ENCODE measurements at regions of chr6 and their contacts with region 1.

Region 1: GRCh38 chr6:154537511-154538325 is 27.2 kb upstream of the CNKSR3 start:
- DNase-seq: peak; percentile 29 to 66
- H3K4me3 ChIP-seq: no peak overlapping the region
- H3K4me3 Mint-ChIP-seq: peak overlapping the region; percentile 30
- H3K27ac Mint-ChIP-seq: peak overlapping the region; percentile 21
- H3K4me1 ChIP-seq: peaks cover 22% of the 10 kb centered on the region
- H3K4me1 Mint-ChIP-seq: peaks cover 24% of the 10 kb centered on the region
- H3K27me3 ChIP-seq: no peaks in the 10 kb centered on the region
- H3K27me3 Mint-ChIP-seq: no peaks in the 10 kb centered on the region
- CTCF ChIP-seq: no peak

Region 2: DNA sequence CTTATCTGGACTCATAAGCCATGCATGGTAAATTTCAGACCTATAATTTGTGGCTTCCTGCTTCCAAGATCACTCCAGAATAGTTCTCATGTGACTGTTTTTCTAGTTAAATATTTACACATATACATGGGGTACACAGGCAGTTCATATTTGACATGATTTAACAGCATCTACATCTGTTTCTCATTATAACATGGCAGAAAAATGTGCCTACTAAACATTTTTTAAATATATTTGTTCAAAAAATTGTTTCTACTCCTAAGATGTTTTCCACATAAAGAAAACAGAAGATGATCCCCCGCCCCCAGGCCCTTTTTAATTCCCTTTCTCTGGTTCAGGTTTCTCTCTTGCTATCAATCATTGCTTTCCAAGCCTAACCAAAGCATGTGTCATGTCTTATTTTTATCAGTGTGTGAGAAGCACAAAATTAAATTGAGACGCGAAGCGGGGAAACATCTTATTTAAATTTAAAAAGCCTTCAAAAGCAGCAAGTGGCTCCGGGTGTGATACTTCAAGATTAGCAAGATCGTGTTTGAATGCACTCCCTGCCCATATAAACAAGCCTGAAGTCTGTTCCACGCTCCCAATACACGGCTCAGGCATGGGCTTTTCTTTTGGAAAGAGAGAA is 218.4 kb before region 1 on chr6:
- CTCF ChIA-PET with region 1: no interaction called
- POLR2A ChIA-PET with region 1: no interaction called
- intact Hi-C with region 1: no loop called
- DNase-seq: no peak
- H3K4me3 ChIP-seq: no peak overlapping the region
- H3K4me3 Mint-ChIP-seq: no peak overlapping the region
- H3K27ac Mint-ChIP-seq: no peak overlapping the region
- H3K4me1 ChIP-seq: 0 out of 2 replicates have a peak, but pooled peaks cover 5% of the 10 kb centered on the region
- H3K4me1 Mint-ChIP-seq: peaks cover 10% of the 10 kb centered on the region
- H3K27me3 ChIP-seq: no peaks in the 10 kb centered on the region
- H3K27me3 Mint-ChIP-seq: no peaks in the 10 kb centered on the region
- CTCF ChIP-seq: no peak

Region 3: GRCh38 chr6:154488802-154489437 is 48.8 kb before region 1 on chr6:
- CTCF ChIA-PET with region 1: no interaction called
- POLR2A ChIA-PET with region 1: no interaction called
- intact Hi-C with region 1: no loop called
- DNase-seq: no peak
- H3K4me3 ChIP-seq: no peak overlapping the region
- H3K4me3 Mint-ChIP-seq: no peak overlapping the region
- H3K27ac Mint-ChIP-seq: no peak overlapping the region
- H3K4me1 ChIP-seq: peaks cover 24% of the 10 kb centered on the region
- H3K4me1 Mint-ChIP-seq: no peaks in the 10 kb centered on the region
- H3K27me3 ChIP-seq: no peaks in the 10 kb centered on the region
- H3K27me3 Mint-ChIP-seq: no peaks in the 10 kb centered on the region
- CTCF ChIP-seq: no peak

Region 4: DNA sequence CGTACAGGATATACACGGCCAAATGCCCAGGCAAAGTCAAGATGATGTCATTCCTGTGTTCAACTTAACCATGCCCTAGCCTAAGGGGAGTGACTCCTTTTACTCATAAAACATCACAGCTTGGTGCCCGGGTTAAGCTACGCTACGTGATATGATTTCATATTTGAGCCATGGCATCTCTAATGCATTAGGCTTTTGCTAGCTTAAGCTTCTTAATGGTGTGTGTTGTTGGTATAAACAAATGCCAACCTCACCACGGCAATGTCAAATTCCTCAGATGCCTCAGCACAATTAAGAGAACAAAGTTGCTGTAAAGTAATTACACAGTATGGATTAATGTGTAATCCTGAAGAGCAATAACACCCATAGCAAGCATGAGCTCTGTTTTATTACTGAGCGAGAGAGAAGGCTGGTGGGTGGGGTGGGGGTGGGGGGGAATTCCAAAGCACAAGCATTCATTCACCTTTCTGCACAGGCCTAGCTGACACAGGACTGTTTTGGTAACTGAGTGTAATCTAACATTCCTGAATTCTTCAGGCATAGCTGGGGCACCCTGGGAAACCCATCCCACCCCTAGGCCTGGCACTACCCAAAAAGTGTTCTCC is 17.5 kb after region 1 on chr6:
- CTCF ChIA-PET with region 1: no interaction called
- POLR2A ChIA-PET with region 1: interaction called, 14 read pairs
- intact Hi-C with region 1: no loop called
- DNase-seq: peak; percentile 24 to 40
- H3K4me3 ChIP-seq: no peak overlapping the region
- H3K4me3 Mint-ChIP-seq: no peak overlapping the region
- H3K27ac Mint-ChIP-seq: peak overlapping the region; percentile 35
- H3K4me1 ChIP-seq: peaks cover 24% of the 10 kb centered on the region
- H3K4me1 Mint-ChIP-seq: peaks cover 17% of the 10 kb centered on the region
- H3K27me3 ChIP-seq: no peaks in the 10 kb centered on the region
- H3K27me3 Mint-ChIP-seq: no peaks in the 10 kb centered on the region
- CTCF ChIP-seq: no peak

Measured in Caco-2 (cell line).